HEK293 (cell line): ENCODE measurements at regions of chr3 and their contacts with region 1.

Region 1: DNA sequence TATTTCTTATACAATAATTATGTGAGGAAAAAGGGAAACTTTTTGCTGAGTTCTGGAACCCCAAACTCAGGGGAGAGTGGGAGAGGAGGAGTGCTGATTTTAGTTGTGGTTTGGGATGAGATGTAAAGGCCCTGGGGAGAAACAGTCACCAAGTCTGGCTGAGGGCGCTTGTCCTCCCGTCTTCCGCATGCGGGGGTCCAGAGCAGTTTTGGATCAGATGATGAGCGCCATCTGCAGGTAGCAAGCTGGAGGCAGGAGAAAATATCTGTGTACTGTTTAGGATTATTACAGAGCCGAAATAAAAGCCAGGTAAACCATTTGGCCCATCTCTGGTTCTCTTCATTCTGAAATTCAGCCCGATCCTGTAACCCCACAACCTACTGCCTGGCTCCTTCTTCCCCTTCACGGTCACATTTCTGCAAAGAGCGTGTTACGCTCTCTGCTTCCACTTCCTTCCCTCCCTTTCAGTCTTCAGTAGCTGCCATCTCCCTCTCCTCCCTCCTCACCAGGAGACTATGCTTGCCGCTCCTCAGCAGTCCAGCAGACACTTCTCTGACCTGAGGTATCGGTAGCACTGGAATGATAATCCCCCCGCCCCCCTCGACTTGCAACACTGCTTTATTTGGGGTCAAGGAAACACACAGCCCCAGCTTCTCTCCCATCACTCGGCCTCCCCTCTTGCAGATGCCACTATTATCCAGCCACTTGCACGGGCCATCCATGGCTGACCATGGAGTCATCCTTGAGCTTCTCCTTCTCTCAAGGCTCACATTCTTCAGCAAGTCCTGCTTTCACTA is 1.4 kb upstream of the PARP14 start:
- H3K4me3 ChIP-seq: no peak overlapping the region; the same call in 1 of the 2 replicates
- H3K27ac ChIP-seq: no peak overlapping the region
- H3K4me1 ChIP-seq: no peaks in the 10 kb centered on the region
- CTCF ChIP-seq: peak; percentile 71

Region 2: GRCh38 chr3:122392868-122393844 is 286.1 kb before region 1 on chr3:
- CTCF ChIA-PET with region 1: interaction called, 20 read pairs
- POLR2A ChIA-PET with region 1: no interaction called
- H3K4me3 ChIP-seq: no peak overlapping the region
- H3K27ac ChIP-seq: no peak overlapping the region
- H3K4me1 ChIP-seq: no peaks in the 10 kb centered on the region
- CTCF ChIP-seq: peak; percentile 24; the same call in 1 of the 2 replicates

Region 3: GRCh38 chr3:122458992-122459391 is 220.3 kb before region 1 on chr3:
- CTCF ChIA-PET with region 1: interaction called, 28 read pairs
- POLR2A ChIA-PET with region 1: no interaction called
- H3K4me3 ChIP-seq: no peak overlapping the region
- H3K27ac ChIP-seq: no peak overlapping the region
- H3K4me1 ChIP-seq: no peaks in the 10 kb centered on the region
- CTCF ChIP-seq: no peak

Region 4: GRCh38 chr3:122560680-122561079 is 118.6 kb before region 1 on chr3:
- CTCF ChIA-PET with region 1: interaction called, 14 read pairs
- POLR2A ChIA-PET with region 1: interaction called, 5 read pairs
- H3K4me3 ChIP-seq: no peak overlapping the region
- H3K27ac ChIP-seq: no peak overlapping the region
- H3K4me1 ChIP-seq: no peaks in the 10 kb centered on the region
- CTCF ChIP-seq: no peak

Region 5: DNA sequence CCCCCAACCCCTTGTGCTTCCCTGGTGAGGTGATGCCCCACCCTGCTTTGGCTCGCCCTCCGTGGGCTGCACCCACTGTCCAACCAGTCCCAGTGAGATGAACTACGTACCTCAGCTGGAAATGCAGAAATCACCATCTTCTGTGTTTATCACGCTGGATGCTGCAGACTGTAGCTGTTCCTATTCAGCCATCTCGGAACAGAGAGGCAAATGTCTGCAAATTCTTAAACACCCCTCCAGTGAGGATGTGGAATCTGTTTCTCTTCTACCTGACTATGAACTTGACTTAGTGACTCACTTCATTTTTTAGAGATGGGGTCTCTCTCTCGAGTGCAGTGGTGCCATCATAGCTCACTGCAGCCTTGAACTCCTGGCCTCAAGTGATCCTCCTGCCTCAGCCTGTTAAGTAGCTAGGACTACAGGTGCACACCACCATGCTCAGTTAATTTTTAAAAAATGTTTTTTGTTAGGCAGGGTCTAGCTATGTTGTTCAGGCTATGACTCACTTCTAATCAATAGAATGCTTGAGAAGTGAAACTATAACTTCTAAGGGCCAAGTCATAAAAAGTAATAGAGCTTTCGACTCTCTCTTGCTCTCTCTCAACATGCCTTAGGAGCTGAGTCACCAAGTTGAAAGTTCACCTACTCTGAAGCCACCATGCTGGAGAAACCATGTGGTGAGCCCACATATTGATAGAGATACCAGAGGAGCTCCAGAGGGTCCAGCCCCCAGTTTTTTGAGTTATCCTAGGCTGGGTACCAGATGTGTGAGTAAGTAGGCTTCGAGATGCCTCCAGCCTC is 10.2 kb before region 1 on chr3:
- CTCF ChIA-PET with region 1: interaction called, 16 read pairs
- POLR2A ChIA-PET with region 1: no interaction called
- H3K4me3 ChIP-seq: no peak overlapping the region
- H3K27ac ChIP-seq: no peak overlapping the region
- H3K4me1 ChIP-seq: no peaks in the 10 kb centered on the region
- CTCF ChIP-seq: no peak